CD8-positive, alpha-beta T cell (primary cell): ENCODE measurements at regions of chr14 and their contacts with region 1.

Region 1: GRCh38 chr14:52706724-52707706 is at the start of gene PSMC6:
- DNase-seq: peak; percentile 91 to 96 (median 95)
- ATAC-seq: peak; percentile 98
- H3K4me3 ChIP-seq: peak within 1 kb of the TSS; percentile 69 to 88
- H3K4me3 Mint-ChIP-seq: peak within 1 kb of the TSS; percentile 96
- H3K27ac ChIP-seq: peak within 1 kb of the TSS; percentile 66 to 84
- H3K27ac Mint-ChIP-seq: peak within 1 kb of the TSS; percentile 94
- H3K4me1 ChIP-seq: peaks cover 20% of the 10 kb centered on the region
- H3K4me1 Mint-ChIP-seq: peaks cover 33% of the 10 kb centered on the region
- H3K27me3 ChIP-seq: no peaks in the 10 kb centered on the region
- H3K27me3 Mint-ChIP-seq: no peaks in the 10 kb centered on the region
- CTCF ChIP-seq: no peak
- total RNA-seq, gene PSMC6: 108 to 122 TPM

Region 2: DNA sequence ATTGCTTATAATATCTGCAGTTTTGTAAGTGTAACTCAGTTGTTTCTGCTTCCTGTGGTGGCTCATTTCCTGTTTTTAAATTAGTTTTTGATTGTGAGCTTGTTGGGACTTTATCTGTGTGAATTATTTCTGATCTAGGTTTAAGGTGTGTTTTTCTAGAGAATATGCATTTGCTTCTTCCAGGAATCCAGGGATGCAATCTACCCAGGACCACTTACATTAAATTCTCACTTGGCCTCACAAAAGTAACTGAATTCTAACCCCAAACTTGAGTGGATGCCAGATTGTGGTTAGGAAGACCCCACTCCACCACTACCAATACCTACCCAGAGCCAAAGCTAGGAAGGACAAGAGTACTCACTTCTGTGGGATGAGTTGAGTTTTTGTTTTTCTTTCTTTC is 34.9 kb after region 1 on chr14:
- CTCF ChIA-PET with region 1: no interaction called
- POLR2A ChIA-PET with region 1: interaction called, 8 read pairs
- intact Hi-C with region 1: loop called in 1 of 2 experiments (anchors 5 kb)
- DNase-seq: peak in 2 of 9 experiments; percentile 37 to 69
- ATAC-seq: peak; percentile 56
- H3K4me3 ChIP-seq: peak overlapping the region; percentile 37 to 42
- H3K4me3 Mint-ChIP-seq: peak overlapping the region; percentile 75
- H3K27ac ChIP-seq: peak overlapping the region; percentile 61 to 87
- H3K27ac Mint-ChIP-seq: peak overlapping the region; percentile 98
- H3K4me1 ChIP-seq: peaks cover 63% of the 10 kb centered on the region
- H3K4me1 Mint-ChIP-seq: peaks cover 76% of the 10 kb centered on the region
- H3K27me3 ChIP-seq: no peaks in the 10 kb centered on the region
- H3K27me3 Mint-ChIP-seq: no peaks in the 10 kb centered on the region
- CTCF ChIP-seq: no peak

Region 3: GRCh38 chr14:53306267-53306721 is 599.3 kb after region 1 on chr14:
- CTCF ChIA-PET with region 1: no interaction called
- POLR2A ChIA-PET with region 1: no interaction called
- intact Hi-C with region 1: no loop called
- DNase-seq: peak in 6 of 9 experiments; percentile 13 to 61 (median 36)
- ATAC-seq: peak; percentile 34
- H3K4me3 ChIP-seq: peak overlapping the region; percentile 1 to 17
- H3K4me3 Mint-ChIP-seq: peak overlapping the region; percentile 52
- H3K27ac ChIP-seq: no peak overlapping the region
- H3K27ac Mint-ChIP-seq: no peak overlapping the region
- H3K4me1 ChIP-seq: no peaks in the 10 kb centered on the region
- H3K4me1 Mint-ChIP-seq: peaks cover 4% of the 10 kb centered on the region
- H3K27me3 ChIP-seq: peaks cover 0 to 2% of the 10 kb centered on the region in 2 experiments
- H3K27me3 Mint-ChIP-seq: peaks cover 5% of the 10 kb centered on the region
- CTCF ChIP-seq: peak; percentile 62